CD8-positive, alpha-beta T cell (primary cell): ENCODE measurements at regions of chr2 and their contacts with region 1.

Region 1: DNA sequence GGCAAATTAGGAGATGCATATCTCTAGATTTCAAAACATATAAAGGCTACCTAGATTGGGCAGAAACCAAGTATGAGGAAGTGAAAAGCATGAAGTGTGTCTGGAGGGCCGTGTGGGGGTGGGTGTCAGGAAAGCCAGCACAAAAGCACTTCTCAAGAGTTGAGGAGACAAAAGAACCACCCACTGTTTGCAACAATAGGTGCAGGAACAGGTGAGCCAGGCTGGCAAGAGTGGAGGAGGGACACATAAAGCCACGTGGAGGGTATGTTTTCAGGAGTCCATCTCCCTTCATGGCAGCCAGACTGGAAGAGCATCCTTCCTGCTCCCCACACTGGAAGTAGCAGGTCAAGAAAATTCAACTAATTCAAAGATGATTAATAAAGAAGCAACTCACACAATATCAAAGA is 96.4 kb downstream of the CERS6 start:
- DNase-seq: no peak
- ATAC-seq: no peak
- H3K4me3 ChIP-seq: no peak overlapping the region
- H3K4me3 Mint-ChIP-seq: no peak overlapping the region
- H3K27ac ChIP-seq: no peak overlapping the region
- H3K27ac Mint-ChIP-seq: no peak overlapping the region
- H3K4me1 ChIP-seq: peaks cover 8% of the 10 kb centered on the region
- H3K4me1 Mint-ChIP-seq: peaks cover 38% of the 10 kb centered on the region
- H3K27me3 ChIP-seq: no peaks in the 10 kb centered on the region
- H3K27me3 Mint-ChIP-seq: no peaks in the 10 kb centered on the region
- CTCF ChIP-seq: no peak

Region 2: DNA sequence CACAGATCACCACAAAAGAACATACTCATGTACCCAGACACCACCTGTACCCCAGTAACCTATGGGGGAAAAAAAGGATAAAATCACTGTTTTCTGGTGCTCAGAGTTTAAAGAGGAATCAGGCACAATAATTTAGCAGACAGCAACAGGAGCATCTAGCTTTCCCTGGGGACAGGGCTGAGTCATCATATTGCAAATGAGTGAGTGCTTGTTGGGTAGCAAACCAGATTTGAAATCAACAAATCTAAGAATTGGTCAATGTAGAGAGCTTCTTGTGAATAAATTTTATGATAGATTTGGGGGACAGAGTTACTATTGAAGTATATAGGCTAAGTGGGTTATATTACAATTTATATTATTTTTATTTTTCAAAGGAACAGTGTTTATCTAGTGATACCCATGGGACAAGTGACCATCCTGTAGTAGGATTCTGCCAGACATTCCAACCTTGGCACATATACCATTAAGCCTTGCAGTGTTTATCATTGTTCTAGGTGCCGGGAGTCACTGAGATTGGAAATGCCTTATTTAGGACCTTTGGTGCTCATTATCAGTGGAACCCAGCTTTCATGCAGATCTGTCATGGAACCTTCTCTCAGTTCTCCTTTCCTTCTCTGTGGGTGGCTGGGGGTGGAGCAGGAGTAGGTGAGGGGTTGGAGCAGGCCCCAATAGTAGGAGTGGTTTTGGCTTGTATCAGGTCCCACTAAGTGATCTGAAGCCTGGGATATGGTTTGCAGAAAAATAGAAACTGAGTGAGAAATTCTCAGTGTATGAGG is 20.9 kb after region 1 on chr2:
- CTCF ChIA-PET with region 1: no interaction called
- POLR2A ChIA-PET with region 1: no interaction called
- intact Hi-C with region 1: loop called in 1 of 2 experiments (anchors 2 kb)
- DNase-seq: no peak
- ATAC-seq: no peak
- H3K4me3 ChIP-seq: no peak overlapping the region
- H3K4me3 Mint-ChIP-seq: no peak overlapping the region
- H3K27ac ChIP-seq: no peak overlapping the region
- H3K27ac Mint-ChIP-seq: peak overlapping the region; percentile 38
- H3K4me1 ChIP-seq: peaks cover 7% of the 10 kb centered on the region
- H3K4me1 Mint-ChIP-seq: peaks cover 21% of the 10 kb centered on the region
- H3K27me3 ChIP-seq: no peaks in the 10 kb centered on the region
- H3K27me3 Mint-ChIP-seq: no peaks in the 10 kb centered on the region
- CTCF ChIP-seq: no peak